ENCODE measurements at regions of chr6 and their contacts with region 1.

Region 1: DNA sequence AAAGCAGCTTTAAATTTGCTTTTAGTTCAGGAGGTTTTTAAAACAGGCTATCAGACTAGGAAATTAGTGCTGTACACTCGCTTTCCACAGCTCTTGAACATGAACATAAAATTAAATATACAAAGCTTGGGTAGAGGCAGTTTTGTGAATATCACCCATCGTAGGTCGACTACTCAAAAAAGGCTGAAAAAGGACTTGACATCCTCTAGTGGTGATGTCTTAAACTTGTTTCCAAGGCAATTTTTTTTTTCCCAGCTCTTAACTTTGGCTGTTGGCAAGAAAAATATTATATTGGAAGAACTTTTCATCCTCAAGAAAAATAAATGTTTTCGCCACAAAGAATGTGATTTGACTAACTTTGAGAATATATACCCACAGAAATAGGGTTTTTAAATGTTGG is 2.9 kb downstream of the MAP7 start:
- DNase-seq: no peak
- H3K4me3 Mint-ChIP-seq: no peak overlapping the region
- H3K27ac Mint-ChIP-seq: no peak overlapping the region
- H3K4me1 Mint-ChIP-seq: peaks cover 37% of the 10 kb centered on the region
- H3K27me3 Mint-ChIP-seq: no peaks in the 10 kb centered on the region
- CTCF ChIP-seq: peak; percentile 39

Region 2: DNA sequence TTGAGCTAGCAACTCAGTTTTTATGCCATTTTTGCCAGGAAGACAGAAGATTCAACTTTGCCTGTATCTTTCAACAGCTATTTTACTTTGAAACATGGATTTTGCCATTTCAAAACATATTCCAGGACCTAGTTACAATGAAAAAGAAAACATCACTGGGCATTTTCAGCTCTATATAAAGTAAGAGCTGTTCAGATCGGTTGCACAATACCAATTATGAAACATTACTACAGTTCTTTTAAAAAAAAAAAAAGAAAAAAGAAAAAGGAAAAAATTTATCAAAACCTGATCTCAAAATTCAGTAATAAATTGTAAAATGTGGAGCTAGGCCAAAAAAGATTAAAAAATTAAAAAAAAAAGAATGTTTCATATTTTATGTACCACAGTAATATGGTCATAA is 273.3 kb before region 1 on chr6:
- CTCF ChIA-PET with region 1: no interaction called
- intact Hi-C with region 1: loop called (anchors 10 kb)
- DNase-seq: no peak
- H3K4me3 Mint-ChIP-seq: no peak overlapping the region
- H3K27ac Mint-ChIP-seq: no peak overlapping the region
- H3K4me1 Mint-ChIP-seq: no peaks in the 10 kb centered on the region
- H3K27me3 Mint-ChIP-seq: no peaks in the 10 kb centered on the region
- CTCF ChIP-seq: no peak

Region 3: GRCh38 chr6:136344420-136344819 is 202.9 kb before region 1 on chr6:
- CTCF ChIA-PET with region 1: no interaction called
- intact Hi-C with region 1: loop called (anchors 5 kb)
- DNase-seq: no peak
- H3K4me3 Mint-ChIP-seq: no peak overlapping the region
- H3K27ac Mint-ChIP-seq: no peak overlapping the region
- H3K4me1 Mint-ChIP-seq: no peaks in the 10 kb centered on the region
- H3K27me3 Mint-ChIP-seq: no peaks in the 10 kb centered on the region
- CTCF ChIP-seq: no peak

Region 4: DNA sequence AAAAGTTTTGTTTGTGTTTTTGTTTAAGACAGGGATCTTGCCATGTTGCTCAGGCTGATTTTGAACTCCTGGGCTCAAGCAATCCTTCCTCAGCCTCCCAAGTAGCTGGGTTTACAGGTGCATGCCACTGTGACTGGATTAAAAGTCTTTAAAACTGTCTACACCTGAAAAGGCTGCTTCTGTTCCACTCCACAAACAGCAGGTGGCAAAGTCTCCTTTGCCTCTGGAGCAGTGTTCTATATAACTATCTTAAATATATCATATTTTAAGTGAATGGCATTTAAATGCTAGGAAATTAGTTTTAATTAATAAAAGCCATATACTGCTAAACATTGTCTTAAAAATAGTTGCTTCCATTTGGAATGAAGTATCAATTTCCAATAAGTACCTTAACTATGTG is 168.4 kb before region 1 on chr6:
- CTCF ChIA-PET with region 1: no interaction called
- intact Hi-C with region 1: loop called (anchors 1 kb)
- DNase-seq: no peak
- H3K4me3 Mint-ChIP-seq: no peak overlapping the region
- H3K27ac Mint-ChIP-seq: no peak overlapping the region
- H3K4me1 Mint-ChIP-seq: no peaks in the 10 kb centered on the region
- H3K27me3 Mint-ChIP-seq: no peaks in the 10 kb centered on the region
- CTCF ChIP-seq: no peak

Region 5: DNA sequence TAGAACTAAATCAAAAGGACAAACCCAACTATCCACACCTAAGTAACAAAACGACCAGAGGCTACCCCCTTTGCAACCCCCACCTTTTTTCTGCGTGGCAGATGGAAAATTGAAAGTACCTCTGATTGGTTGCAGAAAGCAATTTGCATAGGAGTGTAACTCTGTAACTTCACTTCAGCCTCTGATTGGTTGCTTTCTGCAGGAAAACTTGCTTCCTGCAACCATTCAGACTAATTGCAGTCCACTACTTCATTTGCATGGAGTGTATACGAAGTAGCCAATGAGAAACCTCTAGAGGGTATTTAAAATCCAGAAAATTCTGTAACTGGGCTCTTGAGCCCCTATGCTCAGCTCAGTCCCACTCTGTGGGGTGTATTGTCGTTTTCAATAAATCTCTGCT is 1076.0 kb after region 1 on chr6:
- CTCF ChIA-PET with region 1: no interaction called
- intact Hi-C with region 1: no loop called
- DNase-seq: no peak
- H3K4me3 Mint-ChIP-seq: no peak overlapping the region
- H3K27ac Mint-ChIP-seq: no peak overlapping the region
- H3K4me1 Mint-ChIP-seq: no peaks in the 10 kb centered on the region
- H3K27me3 Mint-ChIP-seq: peaks cover 42% of the 10 kb centered on the region
- CTCF ChIP-seq: no peak

Measured in Calu3 (cell line).